ENCODE measurements at regions of chr1 and their contacts with region 1.

Region 1: GRCh38 chr1:200802865-200803512 is 64.3 kb downstream of the CAMSAP2 start:
- DNase-seq: peak; percentile 55 to 87 (median 67)
- ATAC-seq: peak; percentile 95
- H3K4me3 ChIP-seq: no peak overlapping the region
- H3K4me3 Mint-ChIP-seq: no peak overlapping the region
- H3K27ac ChIP-seq: no peak overlapping the region
- H3K27ac Mint-ChIP-seq: no peak overlapping the region
- H3K4me1 ChIP-seq: no peaks in the 10 kb centered on the region
- H3K4me1 Mint-ChIP-seq: peaks cover 6% of the 10 kb centered on the region
- H3K27me3 ChIP-seq: no peaks in the 10 kb centered on the region
- H3K27me3 Mint-ChIP-seq: no peaks in the 10 kb centered on the region
- CTCF ChIP-seq: peak; percentile 93

Region 2: GRCh38 chr1:200558866-200559459 is 244.0 kb before region 1 on chr1:
- CTCF ChIA-PET with region 1: interaction called, 5 read pairs
- POLR2A ChIA-PET with region 1: interaction called, 3 read pairs
- intact Hi-C with region 1: loop called (anchors 1 to 2 kb)
- DNase-seq: peak in 4 of 14 experiments; percentile 10 to 58 (median 45)
- ATAC-seq: no peak
- H3K4me3 ChIP-seq: no peak overlapping the region
- H3K4me3 Mint-ChIP-seq: no peak overlapping the region
- H3K27ac ChIP-seq: no peak overlapping the region
- H3K27ac Mint-ChIP-seq: no peak overlapping the region
- H3K4me1 ChIP-seq: no peaks in the 10 kb centered on the region
- H3K4me1 Mint-ChIP-seq: no peaks in the 10 kb centered on the region
- H3K27me3 ChIP-seq: no peaks in the 10 kb centered on the region
- H3K27me3 Mint-ChIP-seq: no peaks in the 10 kb centered on the region
- CTCF ChIP-seq: peak; percentile 67

Region 3: GRCh38 chr1:200620273-200621131 is 182.5 kb before region 1 on chr1 and contains the start of gene KIF14:
- CTCF ChIA-PET with region 1: interaction called, 20 read pairs
- POLR2A ChIA-PET with region 1: interaction called, 14 read pairs
- intact Hi-C with region 1: loop called (anchors 1 kb)
- DNase-seq: peak; percentile 78 to 95 (median 88)
- ATAC-seq: peak; percentile 95
- H3K4me3 ChIP-seq: peak within 1 kb of the TSS; percentile 83
- H3K4me3 Mint-ChIP-seq: peak within 1 kb of the TSS; percentile 98
- H3K27ac ChIP-seq: peak within 1 kb of the TSS; percentile 23 to 52
- H3K27ac Mint-ChIP-seq: peak within 1 kb of the TSS; percentile 90
- H3K4me1 ChIP-seq: peaks cover 19% of the 10 kb centered on the region
- H3K4me1 Mint-ChIP-seq: peaks cover 31% of the 10 kb centered on the region
- H3K27me3 ChIP-seq: no peaks in the 10 kb centered on the region
- H3K27me3 Mint-ChIP-seq: no peaks in the 10 kb centered on the region
- CTCF ChIP-seq: no peak
- total RNA-seq, gene KIF14: 0.11 TPM

Region 4: GRCh38 chr1:200738740-200739498 is 64.1 kb before region 1 on chr1 and contains the start of gene CAMSAP2:
- CTCF ChIA-PET with region 1: interaction called, 3 read pairs
- POLR2A ChIA-PET with region 1: no interaction called
- intact Hi-C with region 1: loop called in 1 of 2 experiments (anchors 5 kb)
- DNase-seq: peak; percentile 30 to 90 (median 60)
- ATAC-seq: peak; percentile 67
- H3K4me3 ChIP-seq: peak within 1 kb of the TSS; percentile 93
- H3K4me3 Mint-ChIP-seq: peak within 1 kb of the TSS; percentile 100
- H3K27ac ChIP-seq: peak within 1 kb of the TSS; percentile 29 to 36
- H3K27ac Mint-ChIP-seq: peak within 1 kb of the TSS; percentile 90
- H3K4me1 ChIP-seq: peaks cover 17% of the 10 kb centered on the region
- H3K4me1 Mint-ChIP-seq: peaks cover 46% of the 10 kb centered on the region
- H3K27me3 ChIP-seq: no peaks in the 10 kb centered on the region
- H3K27me3 Mint-ChIP-seq: no peaks in the 10 kb centered on the region
- CTCF ChIP-seq: no peak
- total RNA-seq, gene CAMSAP2: 4.4 to 5.7 TPM

Region 5: DNA sequence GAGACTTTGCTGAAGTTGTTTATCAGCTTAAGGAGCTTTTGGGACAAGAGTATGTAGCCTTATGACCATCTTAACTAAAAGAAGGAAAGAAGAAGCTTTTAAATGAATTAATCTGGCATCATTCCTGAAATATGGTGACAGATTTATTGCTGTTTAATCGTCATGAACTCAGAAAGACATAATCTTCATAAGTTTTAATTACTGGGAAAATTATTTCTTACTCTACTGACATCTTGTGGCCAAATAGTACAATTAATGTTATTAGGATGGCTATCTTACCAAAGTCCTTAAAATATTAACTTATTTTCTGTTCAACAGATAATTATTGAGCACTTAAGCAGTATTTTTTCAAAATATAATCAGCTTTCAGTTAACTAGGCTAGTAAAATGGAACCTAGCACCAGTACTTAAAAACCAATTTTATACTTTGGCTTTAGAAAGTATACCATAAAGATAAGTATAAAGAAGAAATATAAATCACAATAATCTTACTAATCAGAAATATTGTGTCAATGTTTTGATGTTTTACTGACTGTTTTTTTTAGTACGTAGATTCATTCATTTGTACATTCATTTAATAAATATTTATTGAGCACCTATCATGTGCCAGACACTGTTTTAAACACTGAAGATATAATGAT is 35.1 kb after region 1 on chr1:
- CTCF ChIA-PET with region 1: no interaction called
- POLR2A ChIA-PET with region 1: no interaction called
- intact Hi-C with region 1: no loop called
- DNase-seq: peak in 2 of 14 experiments; percentile 4 to 10
- ATAC-seq: no peak
- H3K4me3 ChIP-seq: no peak overlapping the region
- H3K4me3 Mint-ChIP-seq: no peak overlapping the region
- H3K27ac ChIP-seq: no peak overlapping the region
- H3K27ac Mint-ChIP-seq: no peak overlapping the region
- H3K4me1 ChIP-seq: no peaks in the 10 kb centered on the region
- H3K4me1 Mint-ChIP-seq: no peaks in the 10 kb centered on the region
- H3K27me3 ChIP-seq: no peaks in the 10 kb centered on the region
- H3K27me3 Mint-ChIP-seq: no peaks in the 10 kb centered on the region
- CTCF ChIP-seq: peak; percentile 22

Measured in CD4-positive, alpha-beta T cell (primary cell).